GM13976 (cell line): ENCODE measurements at regions of chr1 and their contacts with region 1.

Region 1: GRCh38 chr1:110209715-110210603 is at the start of gene KCNC4:
- DNase-seq: peak; percentile 92
- CTCF ChIP-seq: no peak

Region 2: DNA sequence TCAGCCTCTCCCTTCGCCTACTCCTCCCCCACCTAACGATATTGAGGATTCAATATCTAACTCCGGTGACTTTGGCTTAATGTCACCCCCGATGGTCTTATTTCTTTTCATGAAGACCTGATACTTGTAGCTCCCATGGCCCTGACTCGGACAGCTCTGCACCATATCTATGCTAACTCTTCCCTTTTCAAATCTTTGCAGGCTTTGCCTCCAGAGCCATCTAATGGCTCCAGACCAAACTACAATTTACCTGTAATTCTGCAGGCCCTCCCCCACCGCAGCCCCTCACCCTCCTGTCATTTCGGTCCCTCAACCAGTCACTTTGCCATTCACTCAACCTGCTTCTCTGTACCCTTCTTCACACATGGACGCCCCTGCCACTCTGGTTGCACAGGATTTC is 505.8 kb before region 1 on chr1:
- in situ Hi-C with region 1: no loop called
- DNase-seq: no peak
- CTCF ChIP-seq: no peak

Region 3: DNA sequence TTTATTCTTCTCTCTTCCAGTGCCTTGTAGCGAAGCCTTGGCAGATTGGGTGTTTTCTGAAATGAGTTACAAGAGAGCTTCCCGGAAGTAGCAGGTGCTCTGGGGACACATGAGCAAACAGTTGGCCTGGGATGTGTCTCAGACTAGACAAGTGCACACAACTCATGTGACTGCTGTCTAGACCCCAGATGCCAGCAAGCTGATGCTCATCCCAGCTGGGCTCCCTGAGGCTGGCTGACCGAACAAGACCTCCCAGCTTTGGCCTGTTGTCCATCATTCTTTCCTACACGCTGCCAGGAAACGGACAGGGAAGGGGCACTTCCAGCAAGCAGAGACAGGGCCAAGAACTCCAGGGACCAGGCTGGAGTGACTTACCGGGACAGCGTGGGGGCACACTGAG is 318.0 kb before region 1 on chr1:
- in situ Hi-C with region 1: no loop called
- DNase-seq: no peak
- CTCF ChIP-seq: no peak

Region 4: GRCh38 chr1:109979489-109980091 is 230.4 kb before region 1 on chr1:
- in situ Hi-C with region 1: no loop called
- DNase-seq: no peak
- CTCF ChIP-seq: no peak

Region 5: GRCh38 chr1:110312188-110313121 is 102.5 kb after region 1 on chr1:
- in situ Hi-C with region 1: loop called (anchors 5 kb)
- DNase-seq: peak; percentile 72
- CTCF ChIP-seq: peak; percentile 82

Region 6: GRCh38 chr1:110455151-110455550 is 245.2 kb after region 1 on chr1:
- in situ Hi-C with region 1: loop called (anchors 10 kb)
- DNase-seq: no peak
- CTCF ChIP-seq: no peak